Dendritic cell treated with granulocyte-macrophage colony-stimulating factor and Interleukin-4, amounts not matched to agents 40 ng/mL and 50 ng/mL, for 4 days (primary cell): ENCODE measurements at regions of chr5 and their contacts with region 1.

Region 1: GRCh38 chr5:149667084-149667828 is 62.9 kb upstream of the PPARGC1B start:
- H3K4me3 Mint-ChIP-seq: no peak overlapping the region
- H3K27ac Mint-ChIP-seq: peak overlapping the region; percentile 78
- H3K4me1 Mint-ChIP-seq: peaks cover 50% of the 10 kb centered on the region
- H3K27me3 Mint-ChIP-seq: no peaks in the 10 kb centered on the region

Region 2: GRCh38 chr5:149680810-149681221 is 13.6 kb after region 1 on chr5:
- intact Hi-C with region 1: loop called (anchors 2 kb)
- H3K4me3 Mint-ChIP-seq: peak overlapping the region; percentile 17
- H3K27ac Mint-ChIP-seq: peak overlapping the region; percentile 91
- H3K4me1 Mint-ChIP-seq: peaks cover 92% of the 10 kb centered on the region
- H3K27me3 Mint-ChIP-seq: no peaks in the 10 kb centered on the region

Region 3: GRCh38 chr5:149697001-149697400 is 29.7 kb after region 1 on chr5:
- intact Hi-C with region 1: loop called (anchors 5 kb)
- H3K4me3 Mint-ChIP-seq: no peak overlapping the region
- H3K27ac Mint-ChIP-seq: no peak overlapping the region
- H3K4me1 Mint-ChIP-seq: peaks cover 30% of the 10 kb centered on the region
- H3K27me3 Mint-ChIP-seq: peaks cover 5% of the 10 kb centered on the region

Region 4: GRCh38 chr5:149731639-149732323 is 64.5 kb after region 1 on chr5:
- intact Hi-C with region 1: loop called (anchors 1 kb)
- H3K4me3 Mint-ChIP-seq: peak overlapping the region; percentile 91
- H3K27ac Mint-ChIP-seq: peak overlapping the region; percentile 95
- H3K4me1 Mint-ChIP-seq: peaks cover 48% of the 10 kb centered on the region
- H3K27me3 Mint-ChIP-seq: no peaks in the 10 kb centered on the region